Activated CD4-positive, alpha-beta memory T cell treated with anti-CD3 and anti-CD28 coated beads, Interleukin-2, amount 10 ng/mL, durations not matched to agents 7 days and 5 days (primary cell): ENCODE measurements at regions of chr17 and their contacts with region 1.

Region 1: DNA sequence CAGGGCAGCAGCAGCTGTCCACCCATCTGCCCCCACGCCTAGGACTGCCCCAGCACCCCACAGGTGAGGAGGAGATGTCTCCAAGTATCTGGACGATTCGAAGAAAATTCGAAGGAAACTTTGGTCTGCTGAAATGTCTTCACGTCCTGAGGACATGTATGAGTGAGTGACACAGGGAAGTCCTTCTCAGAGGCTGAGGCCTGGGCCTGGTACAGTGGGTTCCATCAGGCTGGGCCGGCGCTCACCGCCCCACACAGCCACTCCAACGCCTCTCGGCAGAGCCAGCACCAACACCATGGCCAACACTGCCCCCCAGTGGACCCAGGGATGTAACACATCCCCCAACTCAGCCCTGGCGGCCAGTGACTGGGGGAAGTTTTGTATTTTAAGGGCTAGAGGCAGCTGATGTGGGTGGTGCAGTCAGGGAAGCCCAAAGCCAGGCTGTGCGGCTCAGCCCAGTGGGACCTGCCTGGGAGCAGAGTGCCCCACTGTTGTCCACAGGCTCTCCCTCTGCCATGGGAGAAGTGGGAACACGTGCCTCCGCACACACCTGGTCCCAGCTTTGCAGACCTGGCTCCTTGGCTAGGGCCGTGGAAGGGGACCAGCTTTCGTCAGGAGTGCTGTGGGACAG is 55.8 kb upstream of the FASN start:
- DNase-seq: peak; percentile 83
- H3K4me3 Mint-ChIP-seq: no peak overlapping the region
- H3K27ac Mint-ChIP-seq: no peak overlapping the region
- H3K4me1 Mint-ChIP-seq: peaks cover 4% of the 10 kb centered on the region
- H3K27me3 Mint-ChIP-seq: no peaks in the 10 kb centered on the region

Region 2: DNA sequence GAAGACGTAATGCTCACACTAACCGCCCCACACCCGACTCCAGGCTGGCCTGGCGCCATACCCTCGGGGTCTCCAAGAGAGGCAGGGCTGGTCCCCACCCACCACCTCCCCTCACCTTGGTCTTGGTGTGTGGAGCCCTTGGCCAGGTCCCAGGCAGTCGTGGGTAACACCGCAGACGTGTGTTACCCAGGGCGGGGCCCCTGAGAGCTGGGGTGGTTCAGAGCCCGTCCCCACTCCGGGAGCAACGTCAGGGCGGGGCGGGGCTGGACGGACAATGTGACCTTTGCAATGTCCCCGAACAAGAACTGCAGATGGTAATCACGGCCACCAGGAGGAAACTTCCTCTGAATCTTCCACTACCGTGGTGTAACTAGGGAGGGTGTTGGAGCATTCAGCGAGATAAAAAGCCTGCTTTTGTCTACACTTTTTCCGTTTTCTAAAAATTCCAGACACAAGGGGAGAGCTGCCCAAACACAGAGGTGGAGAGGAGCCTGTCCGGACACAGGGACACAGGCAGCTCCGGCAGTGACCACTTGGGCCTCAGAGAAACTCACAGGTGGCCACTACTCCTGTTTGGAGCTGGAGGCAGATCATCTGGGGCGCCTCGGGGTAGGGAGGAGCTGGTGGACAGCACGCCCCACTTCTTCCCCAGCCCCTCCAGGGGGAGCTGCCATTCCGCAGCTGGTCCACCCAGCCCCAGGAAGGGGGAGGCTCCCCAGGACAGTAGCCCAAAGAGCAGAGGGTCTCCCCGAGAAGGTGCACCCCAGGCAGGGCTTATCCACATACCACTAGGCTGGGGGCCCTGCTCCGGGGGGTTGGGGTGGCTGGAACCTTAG is 844.6 kb before region 1 on chr17:
- CTCF ChIA-PET with region 1: no interaction called
- POLR2A ChIA-PET with region 1: no interaction called
- DNase-seq: peak; percentile 46
- H3K4me3 Mint-ChIP-seq: no peak overlapping the region
- H3K27ac Mint-ChIP-seq: no peak overlapping the region
- H3K4me1 Mint-ChIP-seq: peaks cover 3% of the 10 kb centered on the region
- H3K27me3 Mint-ChIP-seq: peaks cover 7% of the 10 kb centered on the region

Region 3: GRCh38 chr17:82030470-82031302 is 123.2 kb before region 1 on chr17:
- CTCF ChIA-PET with region 1: interaction called, 15 read pairs
- POLR2A ChIA-PET with region 1: interaction called, 3 read pairs
- DNase-seq: peak; percentile 86
- H3K4me3 Mint-ChIP-seq: peak overlapping the region; percentile 78
- H3K27ac Mint-ChIP-seq: peak overlapping the region; percentile 56
- H3K4me1 Mint-ChIP-seq: peaks cover 31% of the 10 kb centered on the region
- H3K27me3 Mint-ChIP-seq: no peaks in the 10 kb centered on the region